GM23248 (cell line): ENCODE measurements at regions of chr20 and their contacts with region 1.

Region 1: GRCh38 chr20:22333885-22334545 is 250.4 kb downstream of the FOXA2 start:
- DNase-seq: peak; percentile 79
- H3K4me3 ChIP-seq: no peak overlapping the region
- H3K27ac ChIP-seq: no peak overlapping the region
- H3K4me1 ChIP-seq: no peaks in the 10 kb centered on the region
- H3K27me3 ChIP-seq: peaks cover 8% of the 10 kb centered on the region; the same call in 1 of the 2 replicates

Region 2: GRCh38 chr20:22411627-22412450 is 77.8 kb after region 1 on chr20:
- in situ Hi-C with region 1: no loop called
- DNase-seq: peak; percentile 72
- H3K4me3 ChIP-seq: no peak overlapping the region
- H3K27ac ChIP-seq: peak overlapping the region; percentile 61
- H3K4me1 ChIP-seq: peaks cover 15% of the 10 kb centered on the region
- H3K27me3 ChIP-seq: no peaks in the 10 kb centered on the region

Region 3: GRCh38 chr20:22453239-22454080 is 119.4 kb after region 1 on chr20:
- in situ Hi-C with region 1: no loop called
- DNase-seq: peak; percentile 49
- H3K4me3 ChIP-seq: no peak overlapping the region
- H3K27ac ChIP-seq: no peak overlapping the region
- H3K4me1 ChIP-seq: no peaks in the 10 kb centered on the region
- H3K27me3 ChIP-seq: peaks cover 5% of the 10 kb centered on the region

Region 4: GRCh38 chr20:22684072-22684762 is 350.2 kb after region 1 on chr20:
- in situ Hi-C with region 1: loop called (anchors 10 kb)
- DNase-seq: peak; percentile 82
- H3K4me3 ChIP-seq: no peak overlapping the region
- H3K27ac ChIP-seq: no peak overlapping the region
- H3K4me1 ChIP-seq: no peaks in the 10 kb centered on the region
- H3K27me3 ChIP-seq: peaks cover 14% of the 10 kb centered on the region; the same call in 1 of the 2 replicates

Region 5: GRCh38 chr20:22763257-22763906 is 429.4 kb after region 1 on chr20:
- in situ Hi-C with region 1: no loop called
- DNase-seq: peak; percentile 40
- H3K4me3 ChIP-seq: no peak overlapping the region
- H3K27ac ChIP-seq: no peak overlapping the region
- H3K4me1 ChIP-seq: 0 out of 2 replicates have a peak, but pooled peaks cover 6% of the 10 kb centered on the region
- H3K27me3 ChIP-seq: 0 out of 2 replicates have a peak, but pooled peaks cover 3% of the 10 kb centered on the region

Region 6: DNA sequence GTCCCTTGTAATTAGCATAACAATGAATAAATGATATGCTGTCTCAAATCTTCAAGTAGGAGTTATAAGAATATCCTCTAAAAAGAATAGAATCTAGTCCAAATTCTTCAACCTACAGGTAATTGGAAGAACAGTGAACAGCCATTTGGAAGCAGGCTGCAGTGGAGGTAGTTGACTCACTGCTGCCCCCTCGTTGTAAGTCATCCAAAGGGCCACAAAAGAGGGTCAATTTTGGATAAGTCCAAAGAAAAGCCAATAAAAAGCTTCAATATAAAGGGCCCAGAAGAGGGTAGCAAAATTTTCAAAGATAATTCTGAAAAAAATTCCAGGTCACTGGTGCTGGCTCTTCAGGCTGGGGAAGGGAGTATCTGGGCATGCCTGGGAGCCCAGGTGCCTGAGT is 640.3 kb after region 1 on chr20:
- in situ Hi-C with region 1: loop called (anchors 25 kb)
- DNase-seq: peak; percentile 52
- H3K4me3 ChIP-seq: no peak overlapping the region
- H3K27ac ChIP-seq: no peak overlapping the region
- H3K4me1 ChIP-seq: no peaks in the 10 kb centered on the region
- H3K27me3 ChIP-seq: peaks cover 44% of the 10 kb centered on the region

Region 7: GRCh38 chr20:23349338-23350195 is 1015.6 kb after region 1 on chr20:
- in situ Hi-C with region 1: loop called (anchors 25 kb)
- DNase-seq: no peak
- H3K4me3 ChIP-seq: peak overlapping the region; percentile 87
- H3K27ac ChIP-seq: peak overlapping the region; percentile 94
- H3K4me1 ChIP-seq: peaks cover 15% of the 10 kb centered on the region
- H3K27me3 ChIP-seq: no peaks in the 10 kb centered on the region

Region 8: DNA sequence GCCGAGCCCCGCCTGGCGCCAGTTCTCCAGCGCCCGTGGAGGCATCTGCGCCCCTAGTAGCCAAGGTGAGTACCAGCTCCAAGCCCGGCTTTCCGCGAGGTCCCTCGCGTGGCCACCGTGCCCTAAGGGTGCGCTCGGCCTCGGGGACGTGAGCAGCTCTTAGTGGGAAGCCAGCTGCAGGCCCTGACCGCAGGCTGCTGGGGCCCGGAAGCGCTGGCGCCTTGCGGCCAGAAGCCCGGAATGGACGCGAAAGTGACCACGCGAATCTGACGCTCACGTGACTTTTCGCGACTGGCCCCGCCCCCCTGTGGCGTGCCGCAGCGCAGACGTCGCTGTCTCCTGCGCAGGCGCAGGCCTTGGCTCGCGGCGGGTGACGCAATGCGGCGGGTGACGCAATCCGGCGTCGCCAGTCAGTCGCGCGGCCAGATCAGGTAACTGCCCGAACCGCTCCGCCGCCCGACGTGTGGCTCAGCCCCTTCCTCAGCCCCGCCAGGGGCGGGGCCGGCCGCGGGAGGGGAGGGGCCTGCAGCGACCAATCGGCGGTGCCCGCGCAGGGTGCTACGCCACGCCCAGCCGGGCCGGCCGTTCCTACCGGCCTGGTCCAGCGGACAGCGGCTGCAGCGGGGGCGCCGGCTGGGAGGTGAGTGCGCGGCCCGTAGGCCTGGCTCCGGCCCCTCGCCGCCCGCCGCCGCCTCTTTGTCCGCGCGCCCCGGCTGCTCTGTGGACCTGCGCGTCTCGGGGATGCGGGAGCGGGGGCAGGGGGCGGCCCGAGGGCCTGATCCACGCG is 1027.8 kb after region 1 on chr20 and contains the start of gene GZF1:
- in situ Hi-C with region 1: no loop called
- DNase-seq: peak; percentile 99
- H3K4me3 ChIP-seq: peak within 1 kb of the TSS; percentile 87
- H3K27ac ChIP-seq: peak within 1 kb of the TSS; percentile 99
- H3K4me1 ChIP-seq: peaks cover 34% of the 10 kb centered on the region
- H3K27me3 ChIP-seq: no peaks in the 10 kb centered on the region
- total RNA-seq, gene GZF1: 11.0 and 12.3 TPM in 2 replicates